Left cardiac atrium (tissue), 4 donors: ENCODE measurements at regions of chr2 and their contacts with region 1.

Region 1: DNA sequence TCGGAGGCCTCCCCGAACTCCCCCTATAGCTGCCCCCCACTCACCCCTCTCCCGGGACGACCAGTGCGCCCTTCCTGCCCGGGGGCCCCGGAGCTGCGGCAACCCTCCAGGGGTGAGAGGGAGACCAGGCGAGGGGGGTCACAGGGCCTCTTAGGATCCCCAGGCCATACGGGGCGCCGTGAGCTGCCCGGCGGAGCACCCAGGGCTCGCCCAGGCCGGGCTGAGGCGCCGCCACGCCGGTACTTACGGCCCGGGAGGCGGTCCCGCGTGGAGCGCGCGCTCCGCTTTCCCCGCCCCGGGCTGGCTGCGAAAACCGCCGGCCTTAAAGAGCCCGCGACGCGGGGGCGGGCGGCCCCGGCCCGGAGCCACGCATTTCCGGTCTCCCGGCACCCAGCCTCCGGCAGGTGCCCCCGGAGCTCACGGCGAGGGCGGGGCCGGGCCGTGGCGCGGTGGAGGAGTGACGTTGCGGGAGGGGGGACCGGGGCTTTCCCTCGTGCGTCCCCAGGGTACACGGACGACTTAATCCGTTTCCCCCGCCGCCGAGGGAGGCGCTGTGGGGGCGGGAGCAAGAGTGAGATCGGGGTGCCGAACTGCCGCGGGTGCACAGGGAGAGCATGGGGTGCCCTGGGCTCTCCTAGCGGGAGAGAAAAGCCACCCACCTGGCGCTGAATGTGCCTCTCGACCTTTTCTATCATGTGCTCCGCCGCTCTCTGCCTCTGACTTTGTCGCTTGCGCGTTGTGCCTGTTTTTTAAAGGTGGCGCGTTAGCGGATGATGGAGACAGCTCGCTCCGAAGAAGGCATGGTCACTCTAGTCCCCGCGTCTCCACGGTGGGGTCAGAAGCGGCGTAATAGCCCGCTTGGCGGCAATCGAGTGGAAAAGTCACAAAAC is at the start of gene METTL21A:
- DNase-seq: peak; percentile 90
- ATAC-seq: peak; percentile 94
- total RNA-seq, gene METTL21A: 11.9 to 14.5 TPM

Region 2: GRCh38 chr2:207503234-207503633 is 122.0 kb before region 1 on chr2:
- intact Hi-C with region 1: loop called in 1 of 2 experiments (anchors 10 kb)
- DNase-seq: peak; percentile 37
- ATAC-seq: peak; percentile 36 to 55

Region 3: GRCh38 chr2:207529330-207530159 is 95.7 kb before region 1 on chr2 and contains the start of gene CREB1:
- intact Hi-C with region 1: loop called (anchors 10 kb)
- DNase-seq: peak; percentile 98
- ATAC-seq: peak; percentile 96 to 97
- total RNA-seq, gene CREB1: 40.4 to 40.6 TPM

Region 4: DNA sequence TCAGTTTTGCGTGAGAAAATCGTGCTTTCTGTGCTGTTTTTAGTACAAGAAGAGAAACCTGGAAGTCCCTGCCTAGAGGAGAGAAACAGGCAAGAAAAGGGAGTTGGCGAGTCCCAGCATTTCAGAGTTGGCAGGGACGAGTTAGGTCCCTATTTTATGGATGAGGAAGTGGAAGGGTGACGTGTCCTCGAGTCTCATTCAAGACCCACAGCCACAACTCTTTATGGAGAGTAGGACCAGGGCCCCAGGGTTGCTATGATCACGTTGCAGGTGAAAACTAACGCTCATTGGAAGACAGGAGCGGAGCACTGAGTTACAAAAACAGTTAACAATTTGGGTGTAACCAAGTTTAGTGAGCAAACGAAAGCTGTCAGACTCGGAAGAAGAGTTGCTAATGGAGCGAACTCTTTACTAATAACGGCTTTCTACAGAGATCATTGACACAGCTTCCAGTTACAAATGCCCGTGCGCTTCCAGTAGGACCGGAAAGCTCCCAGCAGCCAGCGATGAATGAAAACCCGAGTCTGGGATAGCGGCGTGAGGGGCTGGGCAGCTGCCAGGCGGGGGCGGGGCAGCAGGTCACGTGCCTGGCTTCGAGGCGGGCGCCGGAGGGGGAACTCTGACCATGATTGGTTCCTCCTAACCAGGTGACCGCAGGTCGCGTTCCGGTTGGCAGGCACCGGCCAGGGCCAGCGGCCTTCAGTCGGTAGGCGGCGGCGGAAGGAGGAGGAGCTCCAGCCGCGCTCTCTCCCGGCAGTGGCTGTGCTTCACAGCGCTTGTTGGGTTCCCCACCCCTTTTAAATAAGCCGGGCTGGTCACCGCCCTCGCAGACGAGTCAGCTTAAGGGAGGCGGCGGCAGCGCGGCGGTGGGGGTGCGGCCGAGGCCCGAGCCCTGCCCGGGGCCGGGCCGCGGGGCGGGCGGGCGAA is 85.8 kb after region 1 on chr2 and contains the start of gene CCNYL1:
- intact Hi-C with region 1: loop called (anchors 5 to 10 kb)
- DNase-seq: peak; percentile 99
- ATAC-seq: peak; percentile 98 to 99
- total RNA-seq, gene CCNYL1: 10.5 to 20.4 TPM

Region 5: GRCh38 chr2:207772081-207772843 is 147.0 kb after region 1 on chr2:
- intact Hi-C with region 1: no loop called
- DNase-seq: peak; percentile 50
- ATAC-seq: no peak